ENCODE measurements at regions of chr21 and their contacts with region 1.

Region 1: DNA sequence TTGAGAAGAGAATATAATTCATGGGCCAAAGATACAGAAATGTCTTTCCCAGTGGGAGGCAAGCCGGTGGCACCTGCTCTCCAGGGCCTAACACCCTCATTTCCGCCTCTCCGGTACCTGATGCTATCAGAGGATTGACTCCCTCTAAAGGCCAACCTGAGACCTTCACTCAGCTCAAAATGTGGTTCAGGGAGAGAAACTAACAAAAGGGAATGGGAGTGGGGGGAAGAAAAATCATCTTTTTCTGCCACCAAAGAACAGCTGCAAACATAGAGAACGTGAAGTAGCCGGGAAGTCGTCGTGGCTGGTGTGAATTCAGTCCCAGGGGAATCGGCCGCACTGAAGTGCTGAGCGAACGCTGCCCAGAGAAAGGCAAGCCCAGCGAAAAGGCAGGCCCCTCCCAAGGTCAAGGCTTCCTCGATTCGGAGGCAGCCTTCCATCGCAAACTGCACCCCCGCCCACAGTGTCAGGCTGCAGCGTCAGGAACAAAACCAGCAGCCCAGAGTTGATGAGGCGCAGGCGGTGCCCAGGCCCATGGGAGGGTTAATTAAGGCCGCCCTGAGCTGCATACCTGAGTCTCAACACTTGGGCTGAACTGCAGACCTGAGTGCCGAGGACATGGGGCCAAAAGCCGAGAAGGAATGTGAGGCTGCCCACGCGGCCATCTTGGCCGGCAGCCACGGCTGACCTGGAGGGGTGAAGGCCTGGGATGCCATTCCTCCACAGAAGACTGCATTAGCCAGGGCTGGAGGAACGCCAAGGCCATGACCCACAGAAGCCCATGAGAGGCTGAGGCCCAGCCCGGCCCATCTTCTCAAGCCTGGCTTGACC is 160.2 kb downstream of the PSMG1 start:
- DNase-seq: peak in 1 of 2 experiments; percentile 89
- H3K4me3 ChIP-seq: no peak overlapping the region
- H3K27ac ChIP-seq: no peak overlapping the region
- H3K4me1 ChIP-seq: peaks cover 22% of the 10 kb centered on the region
- H3K27me3 ChIP-seq: no peaks in the 10 kb centered on the region
- CTCF ChIP-seq: 0 out of 2 replicates have a peak, but pooled peaks have one; percentile 25

Region 2: GRCh38 chr21:38839328-38840286 is 183.5 kb before region 1 on chr21:
- CTCF ChIA-PET with region 1: no interaction called
- POLR2A ChIA-PET with region 1: no interaction called
- intact Hi-C with region 1: loop called (anchors 5 kb)
- DNase-seq: peak; percentile 61 to 90
- H3K4me3 ChIP-seq: no peak overlapping the region
- H3K27ac ChIP-seq: peak overlapping the region; percentile 99
- H3K4me1 ChIP-seq: peaks cover 23% of the 10 kb centered on the region
- H3K27me3 ChIP-seq: no peaks in the 10 kb centered on the region
- CTCF ChIP-seq: no peak

Region 3: DNA sequence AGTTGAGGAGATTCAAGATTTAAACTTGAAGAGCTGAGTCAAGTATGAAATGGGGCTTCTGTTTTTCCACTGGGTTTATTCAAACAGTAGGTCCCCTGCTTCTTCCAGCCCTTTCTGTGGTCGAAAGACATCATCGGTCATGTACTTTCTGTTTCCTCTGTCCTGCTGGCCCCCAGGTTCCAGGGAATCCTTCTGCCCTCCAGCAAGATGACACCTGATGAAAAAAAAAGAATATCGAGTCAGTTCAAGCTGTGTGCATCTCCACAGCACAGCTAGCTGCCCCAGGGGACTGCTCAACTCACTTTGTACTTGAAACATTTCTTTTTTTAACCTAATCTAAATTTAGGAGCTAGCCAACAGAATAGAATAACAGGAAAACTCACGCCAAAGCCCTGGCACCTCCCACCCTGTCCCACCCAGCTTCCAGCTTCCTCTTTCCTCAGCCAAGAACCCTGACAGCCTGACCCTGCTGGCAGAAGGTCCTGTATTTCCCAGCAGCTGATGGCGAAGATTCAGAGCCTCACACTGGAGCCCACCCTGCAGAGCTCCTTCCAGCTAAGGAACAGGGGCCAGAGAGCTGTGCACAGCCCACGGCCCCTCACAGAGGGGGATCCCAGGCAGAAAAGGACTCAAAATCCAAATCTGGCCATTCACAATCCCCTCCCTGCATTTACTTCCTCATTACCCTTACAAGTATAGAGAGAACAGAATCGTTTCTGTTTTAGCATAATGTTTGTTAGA is 16.3 kb before region 1 on chr21:
- CTCF ChIA-PET with region 1: no interaction called
- POLR2A ChIA-PET with region 1: no interaction called
- intact Hi-C with region 1: loop called (anchors 1 kb)
- DNase-seq: no peak
- H3K4me3 ChIP-seq: no peak overlapping the region
- H3K27ac ChIP-seq: peak overlapping the region; percentile 9; the same call in 1 of the 2 replicates
- H3K4me1 ChIP-seq: peaks cover 8% of the 10 kb centered on the region
- H3K27me3 ChIP-seq: no peaks in the 10 kb centered on the region
- CTCF ChIP-seq: no peak

Region 4: DNA sequence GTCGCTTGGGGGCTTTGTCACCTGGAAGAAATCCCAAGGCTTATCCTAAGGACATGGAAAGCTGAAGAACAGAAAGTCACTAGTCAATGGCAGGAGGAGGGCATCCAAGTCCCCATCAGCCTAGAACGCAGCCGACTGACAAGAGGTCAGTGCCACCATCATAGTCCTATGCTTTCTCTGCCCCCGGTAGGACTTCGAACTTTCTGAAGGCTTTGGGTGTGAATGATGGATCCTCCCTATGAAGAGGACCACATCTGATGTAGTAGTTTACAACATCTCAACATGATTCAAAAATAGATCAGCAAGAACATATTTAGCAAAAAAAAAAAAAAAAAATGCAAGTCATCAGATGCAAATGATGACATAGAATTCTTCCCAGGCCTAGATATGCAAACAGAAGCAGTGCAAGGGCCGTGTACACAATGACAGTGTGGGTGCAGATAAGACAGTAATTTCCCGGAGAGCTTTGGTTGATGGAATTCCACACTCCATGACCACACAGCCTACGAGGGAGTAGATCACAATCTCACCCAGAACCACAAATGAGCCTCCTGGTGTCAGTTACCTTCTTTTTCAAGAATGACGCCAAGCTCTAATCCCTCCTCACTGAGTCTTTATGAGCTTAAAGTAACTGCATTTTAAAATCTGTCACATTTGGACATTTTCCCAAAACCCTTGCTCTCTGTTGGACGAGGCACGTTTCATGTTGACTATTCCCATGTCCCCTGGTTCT is 71.9 kb after region 1 on chr21:
- CTCF ChIA-PET with region 1: no interaction called
- POLR2A ChIA-PET with region 1: no interaction called
- intact Hi-C with region 1: loop called (anchors 1 kb)
- DNase-seq: peak; percentile 57 to 72
- H3K4me3 ChIP-seq: no peak overlapping the region
- H3K27ac ChIP-seq: 0 out of 2 replicates have a peak overlapping the region, but pooled peaks have one; percentile 32
- H3K4me1 ChIP-seq: peaks cover 5% of the 10 kb centered on the region; the same call in 1 of the 2 replicates
- H3K27me3 ChIP-seq: no peaks in the 10 kb centered on the region
- CTCF ChIP-seq: no peak

Region 5: DNA sequence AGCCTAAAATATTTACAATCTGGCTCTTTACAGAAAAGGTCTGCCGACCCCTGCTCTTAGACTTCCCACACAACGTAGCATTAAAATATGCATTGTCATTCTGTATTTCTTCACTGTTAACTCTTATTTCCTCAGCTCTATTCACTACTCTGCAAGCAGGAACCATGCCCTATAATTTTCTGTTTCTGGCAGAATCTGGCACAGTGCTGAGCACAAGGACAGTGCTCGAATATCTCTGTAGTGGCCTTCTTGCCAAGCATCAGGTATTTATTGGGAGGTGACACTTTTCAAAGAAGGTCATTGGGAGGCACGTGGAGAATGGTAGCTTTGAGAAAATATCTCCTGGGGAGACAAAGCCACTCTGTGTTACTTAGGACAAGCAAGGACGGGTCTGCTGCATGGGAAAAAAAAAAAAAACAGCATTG is 82.3 kb after region 1 on chr21:
- CTCF ChIA-PET with region 1: no interaction called
- POLR2A ChIA-PET with region 1: no interaction called
- intact Hi-C with region 1: no loop called
- DNase-seq: no peak
- H3K4me3 ChIP-seq: no peak overlapping the region
- H3K27ac ChIP-seq: no peak overlapping the region
- H3K4me1 ChIP-seq: no peaks in the 10 kb centered on the region
- H3K27me3 ChIP-seq: no peaks in the 10 kb centered on the region
- CTCF ChIP-seq: no peak

Region 6: DNA sequence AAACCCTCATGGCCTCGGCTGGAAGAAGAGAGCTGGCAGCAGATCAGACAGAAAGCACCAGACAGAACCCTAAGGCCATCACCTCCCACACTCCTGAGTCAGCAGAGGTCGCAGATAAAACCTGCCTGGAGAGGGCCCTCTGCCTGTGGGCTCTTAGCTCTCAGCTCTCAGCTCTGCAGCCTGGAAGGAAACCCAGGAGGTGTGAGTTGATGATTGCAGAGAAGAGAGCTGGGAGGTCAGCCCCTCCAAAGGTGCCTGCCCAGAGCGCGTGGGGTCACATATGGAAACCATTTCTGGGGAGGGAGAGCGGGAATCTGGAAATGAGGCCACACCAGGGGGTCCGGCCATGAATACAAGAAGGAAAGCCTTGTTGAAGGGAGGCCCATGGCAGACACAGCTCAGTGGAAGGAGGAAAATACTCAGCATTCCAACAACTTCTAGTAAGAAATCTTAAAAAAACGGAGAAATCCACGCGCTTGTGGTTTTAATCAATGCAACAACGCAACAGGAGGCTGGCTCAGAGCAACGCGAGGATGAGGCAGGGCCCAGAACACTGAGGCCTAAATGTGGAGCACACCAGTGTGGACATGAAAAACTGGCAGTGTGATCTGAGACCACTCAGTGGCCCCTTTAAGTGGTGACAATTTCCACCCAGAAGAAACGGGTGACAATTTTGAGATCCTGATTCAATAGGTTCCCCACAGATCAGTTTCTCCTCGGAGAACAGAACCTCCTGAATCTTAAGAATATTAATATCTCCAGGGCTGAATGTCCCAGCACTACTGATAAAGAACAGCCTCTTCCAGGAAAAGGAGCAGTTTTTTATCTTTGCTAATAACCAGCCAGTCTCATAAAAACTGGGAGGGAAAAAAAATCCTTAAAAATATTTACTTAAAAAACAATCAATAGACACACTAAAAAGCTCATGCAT is 114.4 kb after region 1 on chr21:
- CTCF ChIA-PET with region 1: no interaction called
- POLR2A ChIA-PET with region 1: interaction called, 24 read pairs
- intact Hi-C with region 1: no loop called
- DNase-seq: no peak
- H3K4me3 ChIP-seq: no peak overlapping the region
- H3K27ac ChIP-seq: no peak overlapping the region
- H3K4me1 ChIP-seq: no peaks in the 10 kb centered on the region
- H3K27me3 ChIP-seq: no peaks in the 10 kb centered on the region
- CTCF ChIP-seq: no peak